CD4-positive, alpha-beta memory T cell (primary cell): ENCODE measurements at regions of chrX and their contacts with region 1.

Region 1: DNA sequence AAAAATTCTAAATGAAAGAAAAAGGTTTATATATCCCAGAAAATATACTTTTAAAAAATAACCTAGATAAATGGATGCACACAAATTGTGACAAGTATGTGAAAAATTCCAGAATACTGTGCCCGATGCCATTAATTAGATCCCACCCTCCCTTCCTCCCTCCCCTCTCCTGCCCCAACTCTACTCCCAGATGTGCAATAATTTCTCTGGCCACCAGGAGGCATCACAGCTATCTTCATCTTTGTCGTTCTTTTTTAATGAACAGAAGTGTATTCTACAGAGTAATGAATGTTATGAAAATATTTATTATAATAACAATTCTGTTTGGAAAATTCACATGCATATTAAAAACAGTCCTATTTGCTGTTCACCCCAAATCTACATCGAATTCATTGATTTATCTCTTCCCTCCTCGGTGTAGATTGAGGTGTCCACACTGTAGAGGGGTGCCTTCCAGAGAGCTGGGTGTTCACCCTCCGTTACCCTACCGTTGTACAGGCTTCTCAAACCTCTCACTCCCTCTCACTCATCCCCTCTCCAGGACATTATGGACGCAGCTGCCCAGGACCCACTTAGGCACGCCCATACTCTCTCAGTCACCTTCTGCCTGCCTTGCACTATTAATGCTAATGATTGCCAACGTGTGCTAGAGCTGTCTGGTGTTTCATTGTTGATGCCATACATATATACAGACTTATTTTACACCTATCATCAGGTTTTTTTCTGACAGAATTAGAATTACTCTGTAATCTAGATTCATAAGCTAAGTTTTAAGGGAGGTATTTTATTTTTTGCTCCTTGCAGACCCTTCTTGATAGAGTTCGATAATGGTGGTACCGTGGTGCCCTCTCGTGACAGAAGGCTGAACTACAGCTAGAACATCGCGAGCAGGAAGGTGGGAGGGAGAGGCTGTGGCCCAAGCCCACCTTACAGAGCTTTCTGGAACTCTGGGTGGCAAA is 14.1 kb downstream of the RAB40AL start:
- DNase-seq: peak; percentile 44 to 59 (median 50)
- H3K4me3 ChIP-seq: no peak overlapping the region
- H3K4me3 Mint-ChIP-seq: peak overlapping the region; percentile 71 to 89 (median 80)
- H3K27ac ChIP-seq: no peak overlapping the region
- H3K27ac Mint-ChIP-seq: peak overlapping the region in 2 of 7 donors; percentile 15 to 30
- H3K4me1 ChIP-seq: no peaks in the 10 kb centered on the region
- H3K4me1 Mint-ChIP-seq: peaks cover 3 to 6% (median 5%) of the 10 kb centered on the region in 4 donors
- H3K27me3 ChIP-seq: no peaks in the 10 kb centered on the region
- H3K27me3 Mint-ChIP-seq: peaks cover 0 to 1% of the 10 kb centered on the region in 2 donors

Region 2: GRCh38 chrX:103157496-103158320 is 206.5 kb after region 1 on chrX:
- CTCF ChIA-PET with region 1: interaction called, 3 read pairs
- POLR2A ChIA-PET with region 1: no interaction called
- intact Hi-C with region 1: loop called (anchors 5 kb)
- DNase-seq: peak in 2 of 5 donors; percentile 13 to 15
- H3K4me3 ChIP-seq: no peak overlapping the region
- H3K4me3 Mint-ChIP-seq: no peak overlapping the region
- H3K27ac ChIP-seq: no peak overlapping the region
- H3K27ac Mint-ChIP-seq: no peak overlapping the region
- H3K4me1 ChIP-seq: no peaks in the 10 kb centered on the region
- H3K4me1 Mint-ChIP-seq: peaks cover 0 to 4% (median 0%) of the 10 kb centered on the region in 4 donors
- H3K27me3 ChIP-seq: no peaks in the 10 kb centered on the region
- H3K27me3 Mint-ChIP-seq: no peaks in the 10 kb centered on the region

Region 3: GRCh38 chrX:103183912-103184311 is 232.7 kb after region 1 on chrX:
- CTCF ChIA-PET with region 1: no interaction called
- POLR2A ChIA-PET with region 1: no interaction called
- intact Hi-C with region 1: loop called (anchors 2 kb)
- DNase-seq: no peak
- H3K4me3 ChIP-seq: no peak overlapping the region
- H3K4me3 Mint-ChIP-seq: no peak overlapping the region
- H3K27ac ChIP-seq: no peak overlapping the region
- H3K27ac Mint-ChIP-seq: no peak overlapping the region
- H3K4me1 ChIP-seq: no peaks in the 10 kb centered on the region
- H3K4me1 Mint-ChIP-seq: peaks cover 0 to 10% (median 2%) of the 10 kb centered on the region in 4 donors
- H3K27me3 ChIP-seq: no peaks in the 10 kb centered on the region
- H3K27me3 Mint-ChIP-seq: peaks cover 2 to 6% of the 10 kb centered on the region in 2 donors

Region 4: GRCh38 chrX:103464774-103465117 is 513.6 kb after region 1 on chrX:
- CTCF ChIA-PET with region 1: interaction called, 11 read pairs
- POLR2A ChIA-PET with region 1: no interaction called
- intact Hi-C with region 1: no loop called
- DNase-seq: peak; percentile 71 to 78 (median 73)
- H3K4me3 ChIP-seq: peak overlapping the region in 1 of 2 donors; percentile 72
- H3K4me3 Mint-ChIP-seq: peak overlapping the region; percentile 86 to 96 (median 92)
- H3K27ac ChIP-seq: peak overlapping the region; percentile 37
- H3K27ac Mint-ChIP-seq: peak overlapping the region; percentile 78 to 95 (median 91)
- H3K4me1 ChIP-seq: peaks cover 21% of the 10 kb centered on the region
- H3K4me1 Mint-ChIP-seq: peaks cover 13 to 39% (median 26%) of the 10 kb centered on the region in 4 donors
- H3K27me3 ChIP-seq: no peaks in the 10 kb centered on the region
- H3K27me3 Mint-ChIP-seq: no peaks in the 10 kb centered on the region